Motor neuron (in vitro differentiated cells): ENCODE measurements at regions of chr7 and their contacts with region 1.

Region 1: GRCh38 chr7:129224251-129225205 is at the start of gene AHCYL2:
- ATAC-seq: peak; percentile 85 to 94 (median 92)
- H3K4me3 ChIP-seq: peak within 1 kb of the TSS; percentile 71 to 95 (median 76)
- H3K27ac ChIP-seq: peak within 1 kb of the TSS; percentile 86 to 93
- H3K4me1 ChIP-seq: peaks cover 12 to 16% of the 10 kb centered on the region in 2 donors
- total RNA-seq, gene AHCYL2: 8.5 to 123 (median 23.8) TPM

Region 2: DNA sequence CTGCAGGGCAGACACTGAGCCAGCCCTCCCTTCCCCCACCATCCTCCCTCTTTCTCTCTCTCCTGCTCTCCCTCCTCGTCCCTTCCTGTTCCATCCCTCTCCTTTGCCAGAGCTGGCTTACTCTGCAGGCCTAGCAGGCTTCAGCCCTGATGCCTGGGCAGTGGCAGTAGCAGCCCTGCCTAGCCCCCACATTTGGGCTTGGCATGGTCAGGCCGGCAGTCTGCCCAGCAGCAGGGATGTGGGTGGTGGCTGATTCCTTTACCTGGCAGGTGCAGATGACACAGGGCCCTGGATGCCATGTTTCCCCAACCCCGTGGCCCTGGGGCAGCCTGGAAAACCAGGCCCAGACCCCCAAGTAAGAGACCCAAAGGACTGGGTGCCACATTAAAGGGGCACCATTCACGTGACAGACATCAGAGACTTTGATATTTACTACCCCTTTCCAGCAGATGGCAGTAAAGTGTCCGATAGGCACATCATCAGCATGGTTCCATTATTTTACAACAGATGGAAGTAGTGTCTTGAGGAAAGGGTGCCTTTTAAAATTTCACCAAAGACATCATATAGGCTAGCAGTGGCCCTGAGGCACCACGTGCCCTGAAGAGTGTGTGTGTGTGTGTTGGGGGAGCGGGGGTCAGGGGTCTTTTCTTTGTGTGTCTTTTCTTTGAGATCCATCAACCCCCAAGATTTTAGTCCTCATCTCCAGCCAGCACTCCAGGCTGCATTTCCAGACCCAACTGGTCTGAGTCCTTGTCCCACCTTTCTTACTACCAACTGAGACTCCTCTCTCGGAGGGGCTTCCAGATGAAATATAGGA is 319.9 kb before region 1 on chr7:
- in situ Hi-C with region 1: no loop called
- ATAC-seq: peak in 6 of 8 experiments; percentile 17 to 83 (median 30)
- H3K4me3 ChIP-seq: no peak overlapping the region
- H3K27ac ChIP-seq: no peak overlapping the region
- H3K4me1 ChIP-seq: peaks cover 0 to 7% of the 10 kb centered on the region in 2 donors

Region 3: GRCh38 chr7:129298268-129298893 is 73.9 kb after region 1 on chr7:
- in situ Hi-C with region 1: loop called in 1 of 9 experiments (anchors 10 kb)
- ATAC-seq: peak in 1 of 8 experiments; percentile 34
- H3K4me3 ChIP-seq: no peak overlapping the region
- H3K27ac ChIP-seq: no peak overlapping the region
- H3K4me1 ChIP-seq: peaks cover 6 to 16% of the 10 kb centered on the region in 2 donors

Region 4: GRCh38 chr7:129468087-129468486 is 243.6 kb after region 1 on chr7:
- in situ Hi-C with region 1: loop called in 5 of 9 experiments (anchors 10 to 25 kb)
- ATAC-seq: peak in 3 of 8 experiments; percentile 25 to 58 (median 49)
- H3K4me3 ChIP-seq: no peak overlapping the region
- H3K27ac ChIP-seq: no peak overlapping the region
- H3K4me1 ChIP-seq: no peaks in the 10 kb centered on the region

Region 5: GRCh38 chr7:129635300-129636029 is 410.9 kb after region 1 on chr7:
- in situ Hi-C with region 1: loop called in 1 of 9 experiments (anchors 25 kb)
- ATAC-seq: peak; percentile 75 to 100 (median 89)
- H3K4me3 ChIP-seq: no peak overlapping the region
- H3K27ac ChIP-seq: no peak overlapping the region
- H3K4me1 ChIP-seq: no peaks in the 10 kb centered on the region

Region 6: GRCh38 chr7:130010689-130011412 is 786.3 kb after region 1 on chr7:
- in situ Hi-C with region 1: loop called in 1 of 9 experiments (anchors 25 kb)
- ATAC-seq: peak; percentile 7 to 80 (median 68)
- H3K4me3 ChIP-seq: no peak overlapping the region
- H3K27ac ChIP-seq: no peak overlapping the region
- H3K4me1 ChIP-seq: no peaks in the 10 kb centered on the region